ENCODE measurements at regions of chr5 and their contacts with region 1.

Region 1: DNA sequence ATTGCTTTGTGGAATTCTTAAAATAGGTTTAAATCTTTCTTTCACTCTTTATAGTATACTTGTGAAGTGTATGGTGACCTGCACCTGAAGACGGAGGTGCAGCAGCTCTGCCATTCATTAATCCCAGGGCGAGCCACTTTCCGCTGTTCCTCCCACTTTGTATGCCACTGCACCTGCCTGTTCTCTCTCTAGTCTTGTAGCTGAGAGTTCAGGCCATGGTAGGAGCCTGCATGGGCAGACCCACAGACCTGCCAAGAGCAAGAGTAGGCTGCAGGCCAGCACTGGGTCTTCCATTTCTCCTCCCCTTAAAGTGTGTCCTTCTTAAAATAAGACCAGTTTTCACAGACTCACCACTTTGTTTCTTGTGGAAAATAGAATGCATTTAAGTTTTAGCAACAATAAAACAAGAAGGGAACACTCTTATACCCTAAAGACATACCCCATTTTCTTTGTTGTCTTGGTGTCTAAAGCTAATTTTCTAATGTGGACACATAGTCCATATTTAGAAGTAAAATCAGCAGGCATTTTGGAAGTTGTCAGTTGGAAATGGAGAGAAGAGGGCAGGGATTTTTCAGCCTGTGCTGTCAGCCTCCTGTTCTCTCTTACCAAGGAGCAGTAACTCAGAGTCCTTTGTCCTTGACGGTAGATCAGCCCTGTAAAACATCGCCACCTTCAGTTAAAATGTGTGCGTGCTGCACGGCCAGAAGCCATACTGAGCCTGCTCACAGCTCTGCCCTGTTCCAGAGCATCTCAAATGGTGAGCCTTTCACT is 103.2 kb downstream of the SNCAIP start:
- DNase-seq: peak; percentile 65

Region 2: GRCh38 chr5:122192497-122193496 is 222.4 kb before region 1 on chr5:
- intact Hi-C with region 1: loop called (anchors 10 kb)
- DNase-seq: no peak

Region 3: DNA sequence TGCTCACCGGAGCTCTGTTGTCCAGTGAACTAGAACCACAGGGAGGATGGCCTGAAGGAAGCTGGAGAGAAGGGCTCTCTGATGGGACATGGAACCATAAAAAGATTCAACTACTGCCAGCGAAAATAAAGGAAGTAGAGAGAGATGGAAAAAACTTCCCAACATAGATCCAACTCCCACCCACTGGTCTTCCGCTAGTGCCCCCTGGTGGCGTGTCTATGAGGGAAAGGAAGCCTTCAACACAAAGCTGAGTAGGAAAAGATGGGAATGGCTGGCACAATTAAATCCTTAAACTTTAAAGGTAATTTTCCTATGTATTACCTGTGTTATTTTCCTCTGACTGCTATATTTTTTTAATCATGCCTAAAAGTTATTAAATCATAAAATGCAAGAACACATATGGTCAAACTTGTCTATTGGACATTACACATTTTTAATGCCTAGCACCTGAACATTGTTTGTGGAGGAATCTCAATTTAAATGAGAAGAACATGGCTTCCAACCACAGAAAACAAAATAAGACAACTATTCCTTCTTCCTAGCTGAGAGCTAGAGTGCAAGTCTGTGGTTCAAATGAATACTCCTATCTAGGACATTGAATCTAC is 956.5 kb after region 1 on chr5:
- intact Hi-C with region 1: no loop called
- DNase-seq: peak; percentile 74

Measured in posterior vena cava (tissue), 2 donors.